ENCODE measurements at regions of chr11 and their contacts with region 1.

Region 1: DNA sequence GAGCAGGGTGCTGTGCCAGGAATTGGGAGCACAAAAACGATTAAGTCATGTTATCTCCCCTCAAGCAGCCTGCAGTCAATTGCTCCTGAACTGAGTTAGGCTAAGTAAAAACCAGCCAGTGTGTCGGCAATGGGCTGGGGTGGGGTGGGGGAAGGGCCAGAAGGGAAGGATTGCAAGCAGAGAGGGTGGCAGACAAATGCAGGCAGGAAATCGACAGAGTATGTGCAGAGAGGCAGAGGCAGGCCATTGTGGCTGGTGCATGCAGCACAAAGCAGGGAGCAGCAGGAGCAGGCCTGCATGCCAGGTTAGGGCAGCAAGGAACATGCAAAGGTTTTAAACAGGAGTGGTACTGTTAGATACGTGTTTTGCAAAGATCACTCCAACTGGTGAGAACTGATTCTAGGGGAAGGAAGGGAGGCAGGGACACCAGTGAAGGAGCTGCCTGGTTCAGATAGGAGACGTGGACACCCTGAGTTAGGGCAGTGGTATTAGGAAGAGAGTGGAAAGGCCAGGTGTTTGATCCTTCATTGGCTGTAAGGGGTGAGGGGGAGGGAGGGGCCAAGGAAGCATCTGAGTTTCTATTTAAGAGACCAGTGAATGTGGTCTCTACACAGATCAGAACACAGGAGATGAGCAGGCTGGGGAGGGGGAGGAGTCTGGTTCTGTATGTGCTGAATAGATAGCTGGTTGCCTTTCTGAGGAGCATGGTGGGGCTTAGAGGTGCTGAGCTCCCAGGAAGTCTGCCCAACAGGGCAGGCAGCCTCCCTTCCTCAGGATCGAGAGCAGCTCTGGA is 70.8 kb upstream of the PHOX2A start:
- DNase-seq: no peak
- H3K4me3 ChIP-seq: no peak overlapping the region
- H3K27ac ChIP-seq: no peak overlapping the region
- H3K4me1 ChIP-seq: no peaks in the 10 kb centered on the region
- H3K27me3 ChIP-seq: no peaks in the 10 kb centered on the region
- CTCF ChIP-seq: no peak

Region 2: DNA sequence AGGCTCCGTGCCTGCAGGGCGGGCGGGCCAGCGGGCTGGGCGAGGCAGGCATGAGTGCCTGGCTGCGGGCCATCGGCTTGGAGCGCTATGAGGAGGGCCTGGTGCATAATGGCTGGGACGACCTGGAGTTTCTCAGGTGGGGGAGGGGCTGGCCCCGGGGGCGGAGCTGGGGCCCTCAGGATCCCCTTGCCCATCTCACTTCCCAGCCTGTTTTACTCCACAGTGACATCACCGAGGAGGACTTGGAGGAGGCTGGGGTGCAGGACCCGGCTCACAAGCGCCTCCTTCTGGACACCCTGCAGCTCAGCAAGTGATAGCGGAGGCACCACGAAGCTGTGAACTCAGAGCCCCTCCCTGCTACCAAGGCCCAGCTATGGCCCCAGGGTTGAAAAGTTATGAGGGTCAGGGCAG is 76.8 kb before region 1 on chr11:
- CTCF ChIA-PET with region 1: no interaction called
- dilution Hi-C with region 1: no loop called
- in situ Hi-C with region 1: no loop called
- intact Hi-C with region 1: no loop called
- DNase-seq: peak; percentile 19
- H3K4me3 ChIP-seq: no peak overlapping the region
- H3K27ac ChIP-seq: no peak overlapping the region
- H3K4me1 ChIP-seq: peaks cover 9% of the 10 kb centered on the region
- H3K27me3 ChIP-seq: peaks cover under 1% of the 10 kb centered on the region
- CTCF ChIP-seq: peak; percentile 69 to 79

Region 3: DNA sequence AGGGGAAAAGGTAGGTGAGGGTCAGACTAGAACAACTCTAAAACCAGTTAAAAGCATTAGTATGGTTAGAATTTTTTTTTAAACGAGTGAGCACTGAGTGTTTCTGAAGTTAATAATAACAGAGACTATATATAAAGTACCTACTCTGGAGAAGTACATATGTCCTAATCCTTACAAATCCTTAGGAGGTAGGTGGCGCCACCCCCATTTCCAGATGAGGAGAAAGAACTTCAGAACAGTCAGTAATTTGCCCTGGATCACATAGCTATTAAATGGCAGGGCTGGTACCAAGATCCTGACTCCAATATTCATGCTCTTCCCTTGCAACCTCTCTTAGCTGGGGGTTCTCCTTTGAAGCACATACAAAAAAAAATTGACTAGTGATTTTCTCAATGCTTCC is 39.1 kb after region 1 on chr11:
- CTCF ChIA-PET with region 1: no interaction called
- dilution Hi-C with region 1: loop called (anchors 5 kb)
- in situ Hi-C with region 1: no loop called
- intact Hi-C with region 1: no loop called
- DNase-seq: no peak
- H3K4me3 ChIP-seq: no peak overlapping the region
- H3K27ac ChIP-seq: no peak overlapping the region
- H3K4me1 ChIP-seq: no peaks in the 10 kb centered on the region
- H3K27me3 ChIP-seq: no peaks in the 10 kb centered on the region
- CTCF ChIP-seq: peak; percentile 8 to 51

Measured in mammary epithelial cell (primary cell).